ENCODE measurements at regions of chr6 and their contacts with region 1.

Region 1: DNA sequence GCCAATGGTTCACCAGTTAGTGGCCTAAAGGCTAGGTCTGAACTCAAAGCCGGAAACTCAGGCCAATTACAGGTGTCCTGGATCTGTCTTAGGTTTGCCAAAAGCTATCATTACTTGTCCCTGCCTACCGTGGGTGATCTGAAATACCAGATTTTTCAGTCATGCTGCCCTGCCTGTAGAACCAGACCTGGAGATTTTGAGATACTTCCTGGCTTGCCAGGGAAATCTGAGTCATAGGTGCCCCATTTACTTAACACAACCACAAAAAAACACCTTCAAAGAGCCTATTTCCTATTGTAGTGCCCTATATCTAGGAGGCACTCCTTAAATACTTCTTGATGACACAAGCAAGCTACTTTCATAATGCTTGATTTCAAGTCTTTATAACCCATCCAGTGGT is 13.9 kb upstream of the RANBP9 start:
- DNase-seq: peak; percentile 54 to 79 (median 75)
- H3K4me3 ChIP-seq: peak overlapping the region in 1 of 2 donors; percentile 0
- H3K4me3 Mint-ChIP-seq: peak overlapping the region; percentile 68 to 89 (median 82)
- H3K27ac ChIP-seq: peak overlapping the region; percentile 46
- H3K27ac Mint-ChIP-seq: peak overlapping the region; percentile 86 to 99 (median 96)
- H3K4me1 ChIP-seq: peaks cover 42% of the 10 kb centered on the region
- H3K4me1 Mint-ChIP-seq: peaks cover 25 to 41% (median 30%) of the 10 kb centered on the region in 4 donors
- H3K27me3 ChIP-seq: no peaks in the 10 kb centered on the region
- H3K27me3 Mint-ChIP-seq: no peaks in the 10 kb centered on the region

Region 2: GRCh38 chr6:13604546-13605416 is 120.8 kb before region 1 on chr6:
- CTCF ChIA-PET with region 1: no interaction called
- POLR2A ChIA-PET with region 1: no interaction called
- intact Hi-C with region 1: no loop called
- DNase-seq: no peak
- H3K4me3 ChIP-seq: no peak overlapping the region
- H3K4me3 Mint-ChIP-seq: no peak overlapping the region
- H3K27ac ChIP-seq: no peak overlapping the region
- H3K27ac Mint-ChIP-seq: no peak overlapping the region
- H3K4me1 ChIP-seq: no peaks in the 10 kb centered on the region
- H3K4me1 Mint-ChIP-seq: no peaks in the 10 kb centered on the region
- H3K27me3 ChIP-seq: no peaks in the 10 kb centered on the region
- H3K27me3 Mint-ChIP-seq: no peaks in the 10 kb centered on the region

Region 3: DNA sequence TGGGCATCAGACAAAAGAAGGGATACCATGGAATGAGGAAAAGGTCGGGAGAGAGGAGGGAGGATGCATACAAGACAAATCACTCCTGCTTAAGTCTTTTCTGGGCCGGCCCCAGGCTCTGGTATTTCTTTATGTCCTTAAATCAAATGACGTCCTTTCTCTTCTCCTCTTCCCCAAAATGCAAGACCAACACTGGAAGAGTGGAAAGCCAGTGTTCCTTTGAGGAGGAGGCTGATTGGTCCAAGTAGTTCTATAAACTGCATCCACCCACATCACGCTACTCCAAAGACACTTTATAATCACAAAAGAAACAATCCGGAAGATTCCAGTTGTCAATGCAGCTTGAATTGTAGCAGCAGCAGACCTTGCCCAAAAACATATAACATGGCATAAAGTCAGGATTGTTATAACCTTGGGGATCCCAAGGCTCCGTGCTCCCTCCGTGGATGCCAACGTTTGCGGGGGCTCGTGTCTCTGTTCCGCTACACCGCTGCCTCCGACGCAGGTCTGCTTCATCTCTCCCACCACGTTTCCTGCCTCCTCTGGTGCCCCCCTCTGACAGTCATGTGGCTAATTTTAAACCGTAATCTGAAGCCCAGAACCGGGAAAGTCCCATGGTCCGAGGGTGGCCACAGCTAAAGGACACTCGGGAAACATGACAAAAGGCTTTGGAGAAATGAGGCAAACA is 41.7 kb after region 1 on chr6:
- CTCF ChIA-PET with region 1: interaction called, 3 read pairs
- POLR2A ChIA-PET with region 1: interaction called, 3 read pairs
- intact Hi-C with region 1: loop called (anchors 5 kb)
- DNase-seq: peak in 4 of 5 donors; percentile 11 to 25 (median 22)
- H3K4me3 ChIP-seq: peak overlapping the region in 1 of 2 donors; percentile 32
- H3K4me3 Mint-ChIP-seq: peak overlapping the region in 7 of 8 donors; percentile 65 to 80 (median 74)
- H3K27ac ChIP-seq: no peak overlapping the region
- H3K27ac Mint-ChIP-seq: peak overlapping the region in 5 of 7 donors; percentile 43 to 89 (median 61)
- H3K4me1 ChIP-seq: peaks cover 19% of the 10 kb centered on the region
- H3K4me1 Mint-ChIP-seq: peaks cover 23 to 44% (median 31%) of the 10 kb centered on the region in 4 donors
- H3K27me3 ChIP-seq: no peaks in the 10 kb centered on the region
- H3K27me3 Mint-ChIP-seq: no peaks in the 10 kb centered on the region

Region 4: GRCh38 chr6:13831615-13832014 is 106.0 kb after region 1 on chr6:
- CTCF ChIA-PET with region 1: no interaction called
- POLR2A ChIA-PET with region 1: no interaction called
- intact Hi-C with region 1: no loop called
- DNase-seq: no peak
- H3K4me3 ChIP-seq: no peak overlapping the region
- H3K4me3 Mint-ChIP-seq: no peak overlapping the region
- H3K27ac ChIP-seq: no peak overlapping the region
- H3K27ac Mint-ChIP-seq: no peak overlapping the region
- H3K4me1 ChIP-seq: no peaks in the 10 kb centered on the region
- H3K4me1 Mint-ChIP-seq: peaks cover 0 to under 1% (median 0%) of the 10 kb centered on the region in 4 donors
- H3K27me3 ChIP-seq: no peaks in the 10 kb centered on the region
- H3K27me3 Mint-ChIP-seq: peaks cover 5 to 11% of the 10 kb centered on the region in 2 donors

Measured in CD4-positive, alpha-beta memory T cell (primary cell).